Mammary epithelial cell (primary cell): ENCODE measurements at regions of chr17 and their contacts with region 1.

Region 1: GRCh38 chr17:3935140-3935542 is 18.9 kb upstream of the P2RX1 start:
- DNase-seq: peak; percentile 32
- H3K4me3 ChIP-seq: no peak overlapping the region
- H3K27ac ChIP-seq: no peak overlapping the region
- H3K4me1 ChIP-seq: no peaks in the 10 kb centered on the region
- H3K27me3 ChIP-seq: no peaks in the 10 kb centered on the region
- CTCF ChIP-seq: peak; percentile 24 to 65

Region 2: DNA sequence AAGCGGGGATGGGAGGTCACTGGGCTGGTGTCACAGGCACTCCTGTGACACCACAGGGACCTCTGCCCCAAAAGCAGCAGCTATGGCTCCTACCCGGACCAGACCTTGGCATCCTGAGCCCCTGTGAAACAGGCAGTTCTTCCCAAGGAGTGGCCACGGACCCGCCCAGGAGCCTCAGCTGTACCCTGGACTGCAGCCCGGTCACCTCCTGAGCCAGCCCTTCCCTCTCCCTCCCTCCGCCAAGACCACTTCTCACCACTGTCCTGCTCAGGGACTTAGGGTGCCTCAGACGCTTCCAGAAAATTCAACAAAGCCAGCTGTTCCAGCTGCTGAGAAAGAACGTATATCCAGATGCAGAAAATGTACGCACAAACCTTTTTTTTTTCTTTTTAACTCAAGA is 75.2 kb before region 1 on chr17:
- CTCF ChIA-PET with region 1: no interaction called
- dilution Hi-C with region 1: no loop called
- in situ Hi-C with region 1: no loop called
- intact Hi-C with region 1: loop called (anchors 2 kb)
- DNase-seq: no peak
- H3K4me3 ChIP-seq: no peak overlapping the region
- H3K27ac ChIP-seq: no peak overlapping the region
- H3K4me1 ChIP-seq: no peaks in the 10 kb centered on the region
- H3K27me3 ChIP-seq: no peaks in the 10 kb centered on the region
- CTCF ChIP-seq: no peak

Region 3: GRCh38 chr17:3972281-3972731 is 37.2 kb after region 1 on chr17:
- CTCF ChIA-PET with region 1: no interaction called
- dilution Hi-C with region 1: loop called (anchors 5 kb)
- in situ Hi-C with region 1: no loop called
- intact Hi-C with region 1: no loop called
- DNase-seq: no peak
- H3K4me3 ChIP-seq: no peak overlapping the region
- H3K27ac ChIP-seq: no peak overlapping the region
- H3K4me1 ChIP-seq: no peaks in the 10 kb centered on the region
- H3K27me3 ChIP-seq: no peaks in the 10 kb centered on the region
- CTCF ChIP-seq: no peak

Region 4: DNA sequence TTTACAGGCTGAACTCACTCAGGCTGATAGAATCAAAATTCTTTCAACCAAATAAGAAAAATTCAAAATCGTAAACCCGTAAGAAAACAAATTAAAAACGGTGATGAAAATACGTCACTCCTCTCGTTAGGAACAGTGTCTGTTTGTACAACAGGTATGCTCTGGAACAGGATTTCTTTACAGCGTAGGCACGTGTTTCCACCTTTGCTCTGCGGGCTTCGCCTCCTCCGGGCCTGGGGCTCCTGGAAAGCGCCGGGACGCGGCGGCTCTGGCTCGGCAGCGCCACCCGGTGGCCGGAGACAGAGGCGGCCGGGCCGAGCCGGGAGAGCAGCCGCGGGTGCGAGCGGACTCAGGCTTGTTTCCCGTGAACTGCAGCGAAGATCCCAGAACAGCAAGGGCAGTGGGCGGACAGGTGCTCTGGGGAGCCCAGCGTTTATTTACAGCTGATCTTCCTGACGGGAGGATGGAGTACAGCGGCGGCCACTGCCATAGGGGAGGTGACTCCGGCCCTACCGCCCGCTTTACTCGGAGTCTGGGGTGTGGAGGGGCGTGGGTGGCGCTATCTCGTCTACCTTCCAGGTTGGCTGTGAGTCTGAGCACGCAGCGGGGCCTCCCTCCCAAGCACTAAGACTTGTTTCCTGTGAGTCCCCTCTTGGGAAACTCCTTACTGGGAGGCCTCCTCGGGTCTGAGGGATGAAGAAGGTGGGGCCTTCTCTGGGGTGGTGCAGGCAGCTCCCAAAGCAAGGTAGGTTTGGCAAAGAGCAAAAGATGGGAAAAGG is 69.6 kb after region 1 on chr17:
- CTCF ChIA-PET with region 1: no interaction called
- dilution Hi-C with region 1: no loop called
- in situ Hi-C with region 1: no loop called
- intact Hi-C with region 1: loop called (anchors 2 kb)
- DNase-seq: no peak
- H3K4me3 ChIP-seq: no peak overlapping the region
- H3K27ac ChIP-seq: no peak overlapping the region
- H3K4me1 ChIP-seq: no peaks in the 10 kb centered on the region
- H3K27me3 ChIP-seq: no peaks in the 10 kb centered on the region
- CTCF ChIP-seq: peak; percentile 59 to 72